T-cell (primary cell): ENCODE measurements at regions of chr11 and their contacts with region 1.

Region 1: DNA sequence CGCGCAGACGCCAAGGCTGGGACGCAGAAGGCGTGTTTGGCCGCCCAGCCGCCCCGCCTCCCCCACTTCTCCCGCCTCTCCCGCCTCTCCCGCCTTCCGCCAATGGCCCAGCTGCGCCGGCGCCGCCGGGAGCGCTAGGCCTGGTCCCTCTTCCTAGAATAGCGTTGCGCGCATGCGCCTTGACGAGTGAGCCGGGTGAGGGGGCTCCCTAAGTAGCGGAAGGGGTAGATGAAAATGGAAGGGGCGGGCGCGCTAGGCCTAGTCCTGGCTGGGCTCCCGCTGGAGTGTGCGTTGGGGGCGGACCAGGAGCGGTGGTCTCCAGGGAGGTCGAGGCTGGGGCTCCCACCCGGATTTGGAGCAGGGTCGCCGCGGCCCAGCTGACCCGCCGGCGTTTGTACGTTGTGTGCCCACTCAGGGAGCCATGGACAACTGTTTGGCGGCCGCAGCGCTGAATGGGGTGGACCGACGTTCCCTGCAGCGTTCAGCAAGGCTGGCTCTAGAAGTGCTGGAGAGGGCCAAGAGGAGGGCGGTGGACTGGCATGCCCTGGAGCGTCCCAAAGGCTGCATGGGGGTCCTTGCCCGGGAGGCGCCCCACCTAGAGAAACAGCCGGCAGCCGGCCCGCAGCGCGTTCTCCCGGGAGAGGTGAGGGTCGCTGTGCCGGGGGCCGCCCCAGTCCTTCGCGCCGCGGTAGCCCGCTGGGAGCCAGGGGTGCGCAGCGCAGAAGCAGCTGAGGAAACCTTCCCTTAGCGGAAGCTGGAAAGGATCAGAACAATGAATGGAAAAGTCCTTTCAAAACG is at the start of gene AKIP1:
- DNase-seq: peak; percentile 46 to 86 (median 67)
- ATAC-seq: peak; percentile 65 to 80 (median 68)
- H3K4me3 ChIP-seq: peak within 1 kb of the TSS; percentile 92 to 93
- H3K4me3 Mint-ChIP-seq: peak within 1 kb of the TSS; percentile 82 to 93 (median 90)
- H3K27ac ChIP-seq: peak within 1 kb of the TSS; percentile 53
- H3K27ac Mint-ChIP-seq: peak within 1 kb of the TSS; percentile 69 to 84
- H3K4me1 ChIP-seq: peaks cover 8 to 36% of the 10 kb centered on the region in 2 experiments
- H3K4me1 Mint-ChIP-seq: peaks cover 30 to 48% (median 43%) of the 10 kb centered on the region in 3 donors
- H3K27me3 ChIP-seq: no peaks in the 10 kb centered on the region
- H3K27me3 Mint-ChIP-seq: no peaks in the 10 kb centered on the region
- total RNA-seq, gene AKIP1: 5.8 to 17.9 (median 11.1) TPM

Region 2: GRCh38 chr11:8777907-8778767 is 133.1 kb before region 1 on chr11:
- CTCF ChIA-PET with region 1: no interaction called
- POLR2A ChIA-PET with region 1: interaction called in 1 of 2 experiments, 13 read pairs
- DNase-seq: no peak
- ATAC-seq: no peak
- H3K4me3 ChIP-seq: no peak overlapping the region
- H3K4me3 Mint-ChIP-seq: no peak overlapping the region
- H3K27ac ChIP-seq: no peak overlapping the region
- H3K27ac Mint-ChIP-seq: no peak overlapping the region
- H3K4me1 ChIP-seq: no peaks in the 10 kb centered on the region
- H3K4me1 Mint-ChIP-seq: no peaks in the 10 kb centered on the region
- H3K27me3 ChIP-seq: peaks cover 0 to 8% of the 10 kb centered on the region in 2 experiments
- H3K27me3 Mint-ChIP-seq: peaks cover 22 to 28% of the 10 kb centered on the region in 2 donors

Region 3: GRCh38 chr11:8832571-8833260 is 78.5 kb before region 1 on chr11:
- CTCF ChIA-PET with region 1: no interaction called
- POLR2A ChIA-PET with region 1: no interaction called
- DNase-seq: no peak
- ATAC-seq: no peak
- H3K4me3 ChIP-seq: no peak overlapping the region
- H3K4me3 Mint-ChIP-seq: no peak overlapping the region
- H3K27ac ChIP-seq: no peak overlapping the region
- H3K27ac Mint-ChIP-seq: no peak overlapping the region
- H3K4me1 ChIP-seq: no peaks in the 10 kb centered on the region
- H3K4me1 Mint-ChIP-seq: peaks cover 0 to 4% (median 3%) of the 10 kb centered on the region in 3 donors
- H3K27me3 ChIP-seq: peaks cover 0 to 37% of the 10 kb centered on the region in 2 experiments
- H3K27me3 Mint-ChIP-seq: peaks cover 3 to 14% of the 10 kb centered on the region in 2 donors

Region 4: DNA sequence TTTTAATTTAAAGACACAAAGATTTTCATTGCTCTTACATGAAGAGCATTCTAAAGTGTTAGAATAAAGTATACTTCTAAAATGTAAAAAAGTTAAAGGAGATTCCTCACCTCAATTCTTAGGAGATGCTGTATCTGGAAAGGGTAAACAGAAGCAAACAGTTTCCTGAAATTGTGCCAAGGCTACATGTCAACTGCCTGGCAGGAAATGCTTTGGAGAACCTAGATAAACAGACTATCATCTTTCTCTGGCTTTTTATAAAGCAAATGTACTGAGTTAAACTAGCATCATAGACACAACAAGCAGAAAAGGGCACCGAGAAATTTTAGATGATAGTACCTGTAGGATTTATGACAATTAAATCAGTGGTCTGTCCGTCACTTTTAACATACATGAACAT is 24.9 kb before region 1 on chr11:
- CTCF ChIA-PET with region 1: no interaction called
- POLR2A ChIA-PET with region 1: no interaction called
- DNase-seq: no peak
- ATAC-seq: no peak
- H3K4me3 ChIP-seq: no peak overlapping the region
- H3K4me3 Mint-ChIP-seq: no peak overlapping the region
- H3K27ac ChIP-seq: no peak overlapping the region
- H3K27ac Mint-ChIP-seq: no peak overlapping the region
- H3K4me1 ChIP-seq: no peaks in the 10 kb centered on the region
- H3K4me1 Mint-ChIP-seq: no peaks in the 10 kb centered on the region
- H3K27me3 ChIP-seq: peaks cover 0 to 5% of the 10 kb centered on the region in 2 experiments
- H3K27me3 Mint-ChIP-seq: peaks cover 25 to 29% of the 10 kb centered on the region in 2 donors

Region 5: GRCh38 chr11:8959546-8960166 is 48.4 kb after region 1 on chr11:
- CTCF ChIA-PET with region 1: interaction called, 14 to 17 read pairs
- POLR2A ChIA-PET with region 1: interaction called, 3 to 5 read pairs
- DNase-seq: peak in 7 of 35 experiments; percentile 6 to 64 (median 12)
- ATAC-seq: no peak
- H3K4me3 ChIP-seq: no peak overlapping the region
- H3K4me3 Mint-ChIP-seq: no peak overlapping the region
- H3K27ac ChIP-seq: no peak overlapping the region
- H3K27ac Mint-ChIP-seq: no peak overlapping the region
- H3K4me1 ChIP-seq: peaks cover 11 to 18% of the 10 kb centered on the region in 2 experiments
- H3K4me1 Mint-ChIP-seq: peaks cover 25 to 36% (median 34%) of the 10 kb centered on the region in 3 donors
- H3K27me3 ChIP-seq: no peaks in the 10 kb centered on the region
- H3K27me3 Mint-ChIP-seq: no peaks in the 10 kb centered on the region

Region 6: GRCh38 chr11:9089634-9090033 is 178.4 kb after region 1 on chr11:
- CTCF ChIA-PET with region 1: no interaction called
- POLR2A ChIA-PET with region 1: no interaction called
- DNase-seq: no peak
- ATAC-seq: no peak
- H3K4me3 ChIP-seq: no peak overlapping the region
- H3K4me3 Mint-ChIP-seq: no peak overlapping the region
- H3K27ac ChIP-seq: no peak overlapping the region
- H3K27ac Mint-ChIP-seq: no peak overlapping the region
- H3K4me1 ChIP-seq: peaks cover 0 to 7% of the 10 kb centered on the region in 2 experiments
- H3K4me1 Mint-ChIP-seq: peaks cover 10 to 19% (median 13%) of the 10 kb centered on the region in 3 donors
- H3K27me3 ChIP-seq: peaks cover 4 to 54% of the 10 kb centered on the region in 2 experiments
- H3K27me3 Mint-ChIP-seq: peaks cover 52 to 62% of the 10 kb centered on the region in 2 donors

Region 7: GRCh38 chr11:9137293-9138132 is 226.3 kb after region 1 on chr11:
- CTCF ChIA-PET with region 1: interaction called, 5 to 11 read pairs
- POLR2A ChIA-PET with region 1: no interaction called
- DNase-seq: peak; percentile 7 to 72 (median 48)
- ATAC-seq: peak; percentile 89 to 93 (median 92)
- H3K4me3 ChIP-seq: no peak overlapping the region
- H3K4me3 Mint-ChIP-seq: no peak overlapping the region
- H3K27ac ChIP-seq: no peak overlapping the region
- H3K27ac Mint-ChIP-seq: peak overlapping the region; percentile 39 to 65
- H3K4me1 ChIP-seq: peaks cover 3 to 5% of the 10 kb centered on the region in 2 experiments
- H3K4me1 Mint-ChIP-seq: peaks cover 16 to 41% (median 37%) of the 10 kb centered on the region in 3 donors
- H3K27me3 ChIP-seq: no peaks in the 10 kb centered on the region
- H3K27me3 Mint-ChIP-seq: no peaks in the 10 kb centered on the region